ENCODE measurements at regions of chr9 and their contacts with region 1.

Region 1: GRCh38 chr9:83707768-83708514 is at the start of gene UBQLN1:
- DNase-seq: peak; percentile 83 to 97 (median 91)
- ATAC-seq: peak; percentile 80
- H3K4me3 ChIP-seq: peak within 1 kb of the TSS; percentile 89 to 97
- H3K4me3 Mint-ChIP-seq: peak within 1 kb of the TSS; percentile 85
- H3K27ac ChIP-seq: peak within 1 kb of the TSS; percentile 98 to 99
- H3K27ac Mint-ChIP-seq: peak within 1 kb of the TSS; percentile 100
- H3K4me1 ChIP-seq: peaks cover 40% of the 10 kb centered on the region
- H3K4me1 Mint-ChIP-seq: peaks cover 43% of the 10 kb centered on the region
- H3K27me3 ChIP-seq: no peaks in the 10 kb centered on the region
- H3K27me3 Mint-ChIP-seq: no peaks in the 10 kb centered on the region
- CTCF ChIP-seq: no peak
- total RNA-seq, gene UBQLN1: 163 to 169 TPM

Region 2: DNA sequence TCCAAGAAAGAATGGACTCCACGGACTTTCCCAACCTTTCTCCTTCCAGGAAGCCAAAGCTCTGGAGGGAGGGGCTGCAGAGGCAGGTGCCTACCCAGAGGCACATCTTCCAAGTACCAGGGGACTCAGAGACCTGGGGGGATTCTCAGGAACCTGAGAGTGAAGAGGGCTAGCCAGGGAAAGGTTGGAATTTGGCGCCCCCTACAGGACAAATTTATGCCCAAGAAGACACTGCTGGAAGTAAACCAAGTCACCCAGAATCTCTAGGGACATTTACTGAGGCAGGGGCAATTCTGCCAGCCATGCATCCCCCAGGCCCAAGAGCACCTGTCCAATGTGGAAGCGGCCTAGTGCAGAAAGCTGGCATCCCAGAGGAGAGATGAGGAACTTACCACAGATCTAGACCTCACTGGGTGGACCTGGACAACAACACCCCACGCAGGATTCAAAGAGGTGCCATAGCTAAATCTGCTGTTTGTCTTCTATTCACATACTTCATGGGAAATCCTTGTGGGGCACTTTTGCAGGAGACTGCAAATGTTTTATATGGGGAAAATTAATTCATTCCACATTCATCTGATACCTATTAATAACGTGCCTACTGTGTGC is 110.9 kb before region 1 on chr9:
- CTCF ChIA-PET with region 1: no interaction called
- POLR2A ChIA-PET with region 1: no interaction called
- intact Hi-C with region 1: no loop called
- DNase-seq: peak in 5 of 9 experiments; percentile 13 to 57 (median 36)
- ATAC-seq: no peak
- H3K4me3 ChIP-seq: no peak overlapping the region
- H3K4me3 Mint-ChIP-seq: no peak overlapping the region
- H3K27ac ChIP-seq: no peak overlapping the region
- H3K27ac Mint-ChIP-seq: no peak overlapping the region
- H3K4me1 ChIP-seq: no peaks in the 10 kb centered on the region
- H3K4me1 Mint-ChIP-seq: no peaks in the 10 kb centered on the region
- H3K27me3 ChIP-seq: no peaks in the 10 kb centered on the region
- H3K27me3 Mint-ChIP-seq: no peaks in the 10 kb centered on the region
- CTCF ChIP-seq: peak; percentile 63

Region 3: GRCh38 chr9:83622939-83623678 is 84.8 kb before region 1 on chr9 and contains the start of gene IDNK:
- CTCF ChIA-PET with region 1: interaction called, 19 read pairs
- POLR2A ChIA-PET with region 1: interaction called, 19 read pairs
- intact Hi-C with region 1: loop called (anchors 1 to 2 kb)
- DNase-seq: peak; percentile 21 to 82 (median 59)
- ATAC-seq: peak; percentile 88
- H3K4me3 ChIP-seq: peak within 1 kb of the TSS; percentile 67 to 74
- H3K4me3 Mint-ChIP-seq: peak within 1 kb of the TSS; percentile 92
- H3K27ac ChIP-seq: peak within 1 kb of the TSS; percentile 78 to 82
- H3K27ac Mint-ChIP-seq: peak within 1 kb of the TSS; percentile 98
- H3K4me1 ChIP-seq: peaks cover 19% of the 10 kb centered on the region
- H3K4me1 Mint-ChIP-seq: peaks cover 33% of the 10 kb centered on the region
- H3K27me3 ChIP-seq: no peaks in the 10 kb centered on the region
- H3K27me3 Mint-ChIP-seq: no peaks in the 10 kb centered on the region
- CTCF ChIP-seq: no peak
- total RNA-seq, gene IDNK: 4.3 to 4.6 TPM

Region 4: GRCh38 chr9:83665580-83666200 is 42.3 kb before region 1 on chr9:
- CTCF ChIA-PET with region 1: interaction called, 3 read pairs
- POLR2A ChIA-PET with region 1: interaction called, 6 read pairs
- intact Hi-C with region 1: loop called (anchors 5 kb)
- DNase-seq: no peak
- ATAC-seq: no peak
- H3K4me3 ChIP-seq: no peak overlapping the region
- H3K4me3 Mint-ChIP-seq: no peak overlapping the region
- H3K27ac ChIP-seq: no peak overlapping the region
- H3K27ac Mint-ChIP-seq: peak overlapping the region; percentile 71
- H3K4me1 ChIP-seq: peaks cover 3% of the 10 kb centered on the region
- H3K4me1 Mint-ChIP-seq: peaks cover 30% of the 10 kb centered on the region
- H3K27me3 ChIP-seq: no peaks in the 10 kb centered on the region
- H3K27me3 Mint-ChIP-seq: no peaks in the 10 kb centered on the region
- CTCF ChIP-seq: no peak

Region 5: GRCh38 chr9:83688921-83689320 is 19.0 kb before region 1 on chr9:
- CTCF ChIA-PET with region 1: interaction called, 7 read pairs
- POLR2A ChIA-PET with region 1: interaction called, 8 read pairs
- intact Hi-C with region 1: loop called (anchors 2 kb)
- DNase-seq: no peak
- ATAC-seq: no peak
- H3K4me3 ChIP-seq: no peak overlapping the region
- H3K4me3 Mint-ChIP-seq: no peak overlapping the region
- H3K27ac ChIP-seq: no peak overlapping the region
- H3K27ac Mint-ChIP-seq: no peak overlapping the region
- H3K4me1 ChIP-seq: peaks cover 35% of the 10 kb centered on the region
- H3K4me1 Mint-ChIP-seq: peaks cover 77% of the 10 kb centered on the region
- H3K27me3 ChIP-seq: no peaks in the 10 kb centered on the region
- H3K27me3 Mint-ChIP-seq: no peaks in the 10 kb centered on the region
- CTCF ChIP-seq: no peak